ENCODE measurements at regions of chr22 and their contacts with region 1.

Region 1: DNA sequence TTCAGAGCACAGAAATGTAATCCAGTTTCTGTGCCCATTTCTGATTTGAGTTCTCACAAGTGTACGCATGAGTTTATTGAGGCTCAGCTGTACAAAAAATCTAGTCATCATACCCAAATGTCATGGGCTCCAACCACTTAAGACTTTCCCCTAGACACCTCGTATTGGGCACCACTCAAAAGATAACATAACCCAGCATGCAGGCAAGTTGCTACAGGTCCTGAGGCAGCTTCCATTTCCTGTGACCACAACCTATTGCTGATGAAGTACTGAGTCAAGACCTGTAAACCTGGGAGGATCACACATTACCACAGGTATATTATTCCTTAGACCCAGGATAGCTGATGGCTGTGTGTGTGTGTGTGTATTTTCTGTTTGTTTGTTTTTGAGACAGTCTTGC is 95.2 kb downstream of the MRTFA start:
- DNase-seq: no peak
- H3K4me3 ChIP-seq: no peak overlapping the region
- H3K27ac ChIP-seq: no peak overlapping the region
- H3K4me1 ChIP-seq: peaks cover 0 to 6% of the 10 kb centered on the region in 2 donors
- H3K27me3 ChIP-seq: no peaks in the 10 kb centered on the region
- CTCF ChIP-seq: no peak
- POLR2A ChIP-seq: no peak

Region 2: GRCh38 chr22:40628354-40629042 is 87.2 kb after region 1 on chr22:
- intact Hi-C with region 1: loop called (anchors 5 kb)
- DNase-seq: no peak
- H3K4me3 ChIP-seq: no peak overlapping the region
- H3K27ac ChIP-seq: no peak overlapping the region
- H3K4me1 ChIP-seq: peaks cover 0 to 6% of the 10 kb centered on the region in 2 donors
- H3K27me3 ChIP-seq: no peaks in the 10 kb centered on the region
- CTCF ChIP-seq: no peak
- POLR2A ChIP-seq: no peak

Region 3: GRCh38 chr22:40867109-40867508 is 325.8 kb after region 1 on chr22:
- intact Hi-C with region 1: no loop called
- DNase-seq: no peak
- H3K4me3 ChIP-seq: no peak overlapping the region
- H3K27ac ChIP-seq: no peak overlapping the region
- H3K4me1 ChIP-seq: no peaks in the 10 kb centered on the region
- H3K27me3 ChIP-seq: no peaks in the 10 kb centered on the region
- CTCF ChIP-seq: no peak
- POLR2A ChIP-seq: no peak